Activated CD8-positive, alpha-beta T cell treated with anti-CD3 and anti-CD28 coated beads, Interleukin-2, amount 10 ng/mL, durations not matched to agents 7 days and 5 days (primary cell): ENCODE measurements at regions of chr2 and their contacts with region 1.

Region 1: DNA sequence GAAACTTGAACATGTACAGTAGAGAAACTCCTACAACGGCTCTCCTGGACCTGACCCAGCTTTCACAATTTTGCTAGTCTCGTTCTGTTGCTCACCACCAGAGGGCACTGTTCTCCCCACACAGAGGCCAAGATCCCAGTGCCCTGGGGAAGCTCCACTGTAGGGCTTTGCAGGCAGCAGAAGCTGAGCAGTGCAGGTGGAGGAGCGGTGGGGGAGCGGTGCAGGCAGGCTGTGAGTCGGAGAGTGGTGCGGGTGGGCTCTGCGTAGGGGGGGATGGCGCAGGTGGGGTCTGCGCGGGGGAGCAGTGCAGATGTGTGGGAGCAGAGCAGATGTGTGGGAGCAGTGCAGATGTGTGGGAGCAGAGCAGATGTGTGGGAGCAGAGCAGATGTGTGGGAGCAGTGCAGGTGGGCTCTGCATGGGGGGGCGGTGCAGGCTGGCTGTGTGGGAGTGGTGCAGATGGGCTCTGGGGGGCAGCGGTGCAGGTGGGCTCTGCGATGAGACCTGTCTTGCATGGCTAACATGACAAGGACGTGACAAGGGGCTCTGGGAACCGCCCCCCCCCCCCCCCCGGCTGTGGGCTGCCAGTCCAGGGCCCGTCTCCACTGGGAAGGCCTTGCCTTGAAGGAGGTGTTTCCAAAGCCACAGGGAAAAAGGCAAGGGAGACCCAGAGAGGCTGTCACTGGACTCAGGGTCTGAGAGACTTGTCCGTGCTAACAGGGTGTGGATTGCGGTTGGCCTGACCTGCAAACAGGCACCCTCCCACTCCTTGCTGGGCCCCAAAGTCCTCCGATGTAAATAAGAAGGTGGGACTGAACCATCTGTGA is 7.3 kb downstream of the CYS1 start:
- DNase-seq: peak; percentile 89
- ATAC-seq: peak; percentile 97
- H3K4me3 Mint-ChIP-seq: no peak overlapping the region
- H3K27ac Mint-ChIP-seq: no peak overlapping the region
- H3K4me1 Mint-ChIP-seq: peaks cover 13% of the 10 kb centered on the region
- H3K27me3 Mint-ChIP-seq: peaks cover 51% of the 10 kb centered on the region

Region 2: DNA sequence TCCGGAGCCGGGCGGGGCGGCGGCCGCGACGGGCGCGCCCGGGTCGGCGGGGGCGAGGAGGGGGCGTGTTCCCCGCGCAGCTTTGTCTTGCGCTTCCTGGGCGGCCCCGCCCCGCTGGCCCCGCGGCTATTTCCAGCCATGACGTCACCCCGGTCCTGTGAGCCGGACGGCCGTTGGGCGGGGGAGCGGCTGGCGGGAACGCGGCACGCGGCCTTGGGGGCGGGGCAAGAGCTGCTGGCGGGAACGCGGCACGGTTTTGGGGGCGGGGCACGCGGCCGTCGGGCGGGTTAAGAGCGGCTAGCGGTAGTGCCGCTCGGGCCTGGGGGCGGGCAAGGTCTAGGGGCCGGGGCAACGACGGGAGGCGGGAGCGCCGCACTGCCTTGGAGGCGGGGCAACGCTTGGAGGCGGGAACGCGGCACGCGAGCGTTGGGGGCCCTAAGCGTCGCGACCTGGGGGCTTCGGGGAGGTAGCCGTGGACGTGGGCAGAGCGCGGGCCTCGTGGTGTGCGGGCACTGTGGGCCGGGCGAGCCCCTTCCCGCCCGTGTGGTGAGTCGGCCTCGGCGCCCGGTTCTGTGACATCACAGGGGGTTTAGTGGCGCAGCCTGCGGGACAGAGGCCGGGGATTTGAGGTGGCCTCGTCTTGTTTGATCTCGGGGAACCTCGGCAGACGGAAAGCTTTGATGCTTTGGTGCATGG is 28.8 kb before region 1 on chr2:
- CTCF ChIA-PET with region 1: interaction called, 13 read pairs
- POLR2A ChIA-PET with region 1: no interaction called
- DNase-seq: peak; percentile 94
- ATAC-seq: peak; percentile 74
- H3K4me3 Mint-ChIP-seq: peak overlapping the region; percentile 72
- H3K27ac Mint-ChIP-seq: peak overlapping the region; percentile 85
- H3K4me1 Mint-ChIP-seq: peaks cover 24% of the 10 kb centered on the region
- H3K27me3 Mint-ChIP-seq: peaks cover 23% of the 10 kb centered on the region

Region 3: DNA sequence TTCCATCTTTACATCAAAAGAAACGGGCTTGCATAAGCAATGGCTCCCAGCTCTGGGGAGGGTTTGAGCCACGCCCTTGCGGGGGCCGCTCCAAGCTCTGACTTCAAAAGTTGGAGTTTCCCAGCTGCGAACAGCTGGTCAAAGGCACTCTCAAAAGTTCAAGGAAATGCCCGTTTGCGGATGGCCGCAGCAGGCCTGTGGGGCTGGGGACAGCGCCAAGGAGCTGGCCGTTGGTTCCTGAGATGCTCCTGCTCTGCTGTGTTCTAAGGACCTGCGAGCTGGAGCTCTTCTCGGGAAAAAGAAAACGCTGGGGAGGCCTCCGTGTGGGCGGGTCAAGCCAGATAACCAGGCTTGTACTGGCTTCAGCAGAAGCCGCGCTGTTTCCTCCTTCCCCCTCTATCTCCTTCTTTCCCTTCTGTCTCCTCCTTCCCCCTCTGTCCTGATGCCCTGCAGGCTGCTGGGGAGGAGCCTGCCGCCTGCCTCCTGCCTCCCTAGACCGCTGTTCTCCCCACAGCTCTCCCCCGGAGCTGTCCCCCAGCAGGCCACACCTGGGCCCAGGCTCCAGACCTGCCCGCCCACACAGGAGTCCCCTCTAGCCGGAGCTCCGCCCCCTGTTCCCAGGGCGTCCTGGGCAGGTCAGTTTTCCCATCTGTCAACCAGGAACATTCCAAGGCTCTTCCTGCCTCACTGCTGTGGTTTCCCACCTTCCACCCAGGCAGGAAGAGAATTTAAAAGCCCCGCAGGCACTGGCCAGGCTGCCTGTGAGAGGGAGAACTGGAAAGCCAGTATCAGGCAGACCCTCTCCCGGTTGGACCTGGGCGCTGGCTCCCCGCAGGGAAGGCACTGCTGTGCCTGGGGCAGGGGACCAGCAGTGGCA is 15.4 kb before region 1 on chr2:
- CTCF ChIA-PET with region 1: interaction called, 18 read pairs
- POLR2A ChIA-PET with region 1: no interaction called
- DNase-seq: no peak
- ATAC-seq: no peak
- H3K4me3 Mint-ChIP-seq: no peak overlapping the region
- H3K27ac Mint-ChIP-seq: no peak overlapping the region
- H3K4me1 Mint-ChIP-seq: peaks cover 4% of the 10 kb centered on the region
- H3K27me3 Mint-ChIP-seq: peaks cover 3% of the 10 kb centered on the region

Region 4: DNA sequence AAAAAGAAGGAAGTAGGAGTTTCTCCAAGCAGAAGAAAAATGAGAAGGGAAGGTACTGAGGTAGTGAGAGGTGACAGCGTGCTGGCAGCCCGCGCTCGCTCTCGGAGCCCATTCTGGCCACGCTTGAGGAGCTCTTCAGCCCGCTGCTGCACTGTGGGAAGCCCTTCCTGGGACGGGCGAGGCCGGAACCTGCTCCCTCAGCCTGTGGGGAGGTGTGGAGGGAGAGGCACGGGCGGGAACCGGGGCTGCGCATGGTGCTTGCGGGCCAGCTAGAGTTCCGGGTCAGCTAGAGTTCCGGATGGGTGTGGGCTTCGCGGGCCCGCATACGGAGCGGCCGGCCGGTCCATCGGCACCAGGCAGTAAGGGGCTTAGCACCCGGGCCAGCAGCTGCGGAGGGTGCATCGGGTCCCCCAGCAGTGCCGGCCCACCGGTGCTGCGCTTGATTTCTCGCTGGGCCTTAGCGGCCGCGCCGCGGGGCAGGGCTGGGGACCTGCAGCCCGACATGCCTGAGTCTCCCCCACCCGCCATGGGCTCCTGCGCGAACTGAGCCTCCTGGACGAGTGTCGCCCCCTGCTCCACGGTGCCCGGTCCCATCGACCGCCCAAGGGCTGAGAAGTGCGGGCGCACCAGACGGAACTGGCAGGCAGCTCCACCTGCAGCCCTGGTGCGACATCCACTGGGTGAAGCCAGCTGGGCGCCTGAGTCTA is 18.5 kb after region 1 on chr2:
- CTCF ChIA-PET with region 1: interaction called, 109 read pairs
- POLR2A ChIA-PET with region 1: interaction called, 3 read pairs
- DNase-seq: peak; percentile 39
- ATAC-seq: peak; percentile 64
- H3K4me3 Mint-ChIP-seq: peak overlapping the region; percentile 5
- H3K27ac Mint-ChIP-seq: no peak overlapping the region
- H3K4me1 Mint-ChIP-seq: peaks cover 13% of the 10 kb centered on the region
- H3K27me3 Mint-ChIP-seq: peaks cover 59% of the 10 kb centered on the region

Region 5: GRCh38 chr2:10097352-10098148 is 24.7 kb after region 1 on chr2:
- CTCF ChIA-PET with region 1: interaction called, 109 read pairs
- POLR2A ChIA-PET with region 1: no interaction called
- DNase-seq: peak; percentile 44
- ATAC-seq: peak; percentile 91
- H3K4me3 Mint-ChIP-seq: no peak overlapping the region
- H3K27ac Mint-ChIP-seq: no peak overlapping the region
- H3K4me1 Mint-ChIP-seq: peaks cover 4% of the 10 kb centered on the region
- H3K27me3 Mint-ChIP-seq: peaks cover 40% of the 10 kb centered on the region

Region 6: GRCh38 chr2:10103179-10103732 is 30.4 kb after region 1 on chr2:
- CTCF ChIA-PET with region 1: interaction called, 109 read pairs
- POLR2A ChIA-PET with region 1: no interaction called
- DNase-seq: no peak
- ATAC-seq: no peak
- H3K4me3 Mint-ChIP-seq: no peak overlapping the region
- H3K27ac Mint-ChIP-seq: no peak overlapping the region
- H3K4me1 Mint-ChIP-seq: no peaks in the 10 kb centered on the region
- H3K27me3 Mint-ChIP-seq: peaks cover 15% of the 10 kb centered on the region

Region 7: DNA sequence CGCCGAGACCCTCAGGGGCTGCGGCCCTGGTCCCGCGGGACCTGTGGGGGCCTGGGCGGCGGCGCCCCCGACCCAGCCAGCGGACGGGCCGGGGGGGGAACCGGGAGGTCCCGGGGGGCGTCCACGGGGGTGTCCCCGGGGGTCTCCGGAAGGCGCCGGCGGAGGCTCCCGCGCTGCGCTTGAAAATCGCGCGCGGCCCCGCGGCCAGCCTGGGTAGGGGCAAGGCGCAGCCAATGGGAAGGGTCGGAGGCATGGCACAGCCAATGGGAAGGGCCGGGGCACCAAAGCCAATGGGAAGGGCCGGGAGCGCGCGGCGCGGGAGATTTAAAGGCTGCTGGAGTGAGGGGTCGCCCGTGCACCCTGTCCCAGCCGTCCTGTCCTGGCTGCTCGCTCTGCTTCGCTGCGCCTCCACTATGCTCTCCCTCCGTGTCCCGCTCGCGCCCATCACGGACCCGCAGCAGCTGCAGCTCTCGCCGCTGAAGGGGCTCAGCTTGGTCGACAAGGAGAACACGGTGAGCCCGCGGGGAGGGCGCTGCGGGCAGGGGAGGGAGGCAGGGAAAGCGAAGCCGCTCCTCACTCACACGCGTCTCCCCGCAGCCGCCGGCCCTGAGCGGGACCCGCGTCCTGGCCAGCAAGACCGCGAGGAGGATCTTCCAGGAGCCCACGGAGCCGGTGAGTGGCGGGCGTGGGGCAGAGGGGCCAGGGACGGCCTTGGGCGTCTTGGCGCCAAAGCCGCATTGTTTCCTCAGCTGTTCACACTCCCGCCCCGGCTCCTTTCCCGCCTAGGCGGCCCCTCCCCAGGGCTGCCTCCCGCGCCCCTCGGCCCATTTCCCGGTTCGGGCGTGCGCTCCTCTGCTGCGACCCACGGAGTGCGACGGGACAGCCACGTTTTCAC is 49.8 kb after region 1 on chr2 and contains the start of gene RRM2:
- CTCF ChIA-PET with region 1: interaction called, 94 read pairs
- POLR2A ChIA-PET with region 1: interaction called, 5 read pairs
- DNase-seq: peak; percentile 98
- ATAC-seq: peak; percentile 81
- H3K4me3 Mint-ChIP-seq: peak within 1 kb of the TSS; percentile 98
- H3K27ac Mint-ChIP-seq: peak within 1 kb of the TSS; percentile 99
- H3K4me1 Mint-ChIP-seq: peaks cover 55% of the 10 kb centered on the region
- H3K27me3 Mint-ChIP-seq: no peaks in the 10 kb centered on the region
- total RNA-seq, gene RRM2: 571 to 604 TPM

Region 8: DNA sequence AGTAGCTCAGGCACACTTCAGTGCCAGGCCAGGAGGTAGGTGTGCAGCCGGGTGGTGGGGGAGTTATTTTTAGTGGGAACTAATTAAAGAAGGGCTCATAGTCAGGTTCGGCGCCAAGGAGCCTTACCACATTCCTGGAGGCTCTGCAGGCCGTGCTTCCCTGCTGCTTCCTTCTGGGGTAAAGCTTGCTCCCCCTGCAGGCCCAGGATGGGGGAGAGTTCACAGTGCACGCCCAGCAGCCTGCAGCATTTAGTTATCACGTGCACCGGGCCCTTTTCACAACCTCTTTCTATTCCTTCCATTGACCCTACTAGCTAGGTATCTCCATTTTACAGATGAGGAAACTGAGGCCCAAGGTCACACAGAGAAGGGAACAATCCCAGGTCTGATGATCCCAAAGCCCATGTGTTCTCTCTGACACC is 841.4 kb after region 1 on chr2:
- CTCF ChIA-PET with region 1: no interaction called
- POLR2A ChIA-PET with region 1: no interaction called
- DNase-seq: no peak
- ATAC-seq: no peak
- H3K4me3 Mint-ChIP-seq: no peak overlapping the region
- H3K27ac Mint-ChIP-seq: no peak overlapping the region
- H3K4me1 Mint-ChIP-seq: no peaks in the 10 kb centered on the region
- H3K27me3 Mint-ChIP-seq: peaks cover 24% of the 10 kb centered on the region